Left cardiac atrium (tissue), 4 donors: ENCODE measurements at regions of chr11 and their contacts with region 1.

Region 1: DNA sequence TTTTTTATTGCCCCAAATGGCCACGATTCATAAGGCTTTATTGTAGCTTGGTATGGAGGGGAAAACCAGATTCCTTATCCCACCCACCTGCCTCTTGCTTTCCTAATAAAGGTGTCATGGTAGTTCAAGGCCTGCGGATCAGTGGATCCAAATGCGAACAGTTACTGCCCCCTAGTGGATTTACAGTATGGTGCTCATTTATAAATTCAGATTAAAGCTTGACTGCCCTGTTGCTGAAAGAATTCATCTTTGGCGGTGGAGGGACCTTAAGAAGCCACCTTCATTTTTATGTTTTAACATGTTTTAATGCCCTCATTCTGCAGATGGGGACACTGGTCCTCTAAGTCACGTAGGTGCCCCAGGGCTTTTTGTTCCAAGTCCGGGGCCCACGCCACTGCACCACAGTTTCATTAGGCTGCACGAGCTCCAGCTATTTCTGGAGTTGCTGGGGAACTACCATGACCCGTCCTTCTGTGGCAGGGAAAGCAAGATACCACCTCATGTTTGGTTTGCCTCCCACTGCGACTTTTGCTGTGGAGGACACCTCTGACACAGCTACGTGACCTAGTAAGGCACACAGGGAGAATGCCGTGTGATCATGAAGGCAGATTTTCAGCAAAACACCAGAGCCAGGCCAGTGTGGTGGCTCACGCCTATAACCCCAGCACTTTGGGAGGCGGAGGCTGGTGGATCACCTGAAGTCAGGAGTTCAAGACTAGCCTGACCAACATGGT is 15.6 kb upstream of the INCENP start:
- DNase-seq: no peak
- ATAC-seq: peak; percentile 12 to 25

Region 2: DNA sequence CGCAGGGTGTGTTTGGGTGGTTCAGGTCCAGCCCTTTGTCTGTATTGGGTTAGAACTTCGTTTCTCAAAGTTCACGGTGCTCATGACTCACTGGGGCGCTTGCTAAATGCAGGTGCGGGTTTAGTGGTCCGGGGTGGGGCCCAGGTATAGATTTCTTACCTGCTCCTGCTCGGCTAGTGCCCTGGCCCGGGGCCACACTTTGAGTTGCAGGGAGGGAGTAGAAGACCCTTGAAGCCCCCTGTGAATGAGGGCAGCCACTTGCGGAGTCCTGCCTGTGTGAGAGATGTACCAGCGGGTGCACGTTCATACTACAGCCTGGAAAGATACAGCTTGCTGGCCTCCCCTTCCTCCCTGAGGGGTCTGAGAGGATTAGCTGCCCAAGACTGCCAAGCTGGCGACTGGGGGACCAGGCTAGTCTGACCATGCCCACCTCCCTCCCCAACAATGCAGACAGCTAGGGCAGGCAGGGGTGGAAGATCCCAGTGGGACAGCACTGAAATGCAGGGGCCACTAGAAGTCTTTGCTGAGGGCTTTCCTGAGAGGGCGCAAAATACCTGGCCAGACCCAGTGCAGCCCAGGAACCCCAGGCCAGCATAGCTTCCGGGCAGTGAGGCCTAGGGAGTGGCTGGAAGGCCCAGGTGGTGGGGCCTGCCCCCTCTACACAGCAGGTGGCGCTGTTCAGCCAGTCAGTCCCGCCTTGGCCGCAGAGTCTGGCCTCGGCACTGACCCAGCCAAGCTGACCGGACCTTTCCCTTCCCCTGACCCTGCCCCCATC is 360.8 kb before region 1 on chr11:
- intact Hi-C with region 1: loop called in 1 of 2 experiments (anchors 5 kb)
- DNase-seq: peak; percentile 87
- ATAC-seq: peak; percentile 83 to 87

Region 3: GRCh38 chr11:61797263-61797944 is 310.8 kb before region 1 on chr11:
- intact Hi-C with region 1: loop called in 1 of 2 experiments (anchors 5 kb)
- DNase-seq: peak; percentile 82
- ATAC-seq: peak; percentile 15 to 38

Region 4: DNA sequence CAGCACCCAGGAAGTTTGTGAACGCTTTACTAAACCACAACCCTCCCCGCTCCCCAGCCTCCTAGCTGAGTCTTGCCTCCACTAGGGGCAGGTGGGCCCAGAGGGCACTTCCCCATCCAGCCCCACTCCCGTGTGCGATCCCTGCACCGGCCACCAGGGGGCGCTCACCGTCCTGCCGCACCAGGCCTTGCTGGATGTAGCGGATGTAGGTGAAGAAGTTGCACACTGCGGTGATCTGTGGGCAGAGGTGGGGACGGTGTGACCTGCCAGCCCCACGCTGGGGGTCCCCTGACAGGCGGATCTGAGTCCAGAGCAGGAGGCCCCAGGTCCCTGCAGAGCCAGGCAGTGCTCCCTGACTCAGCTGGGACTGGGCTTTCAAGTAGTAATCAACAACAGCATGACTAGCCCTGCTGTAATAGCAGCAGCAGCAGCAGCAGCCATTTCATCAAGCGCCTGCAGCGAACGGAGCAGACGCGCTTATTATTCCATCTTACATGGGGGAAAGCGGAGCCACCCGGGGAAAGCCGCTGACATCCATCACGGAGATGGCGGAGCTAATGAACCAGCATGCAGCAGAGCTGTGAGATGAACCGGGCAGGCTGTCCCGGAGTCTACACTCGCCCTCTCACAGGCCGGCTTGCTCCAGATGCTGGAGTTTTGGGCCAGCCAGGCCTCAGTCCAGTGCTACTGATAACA is 208.9 kb before region 1 on chr11:
- intact Hi-C with region 1: loop called in 1 of 2 experiments (anchors 5 kb)
- DNase-seq: peak; percentile 82
- ATAC-seq: peak; percentile 83 to 85

Region 5: DNA sequence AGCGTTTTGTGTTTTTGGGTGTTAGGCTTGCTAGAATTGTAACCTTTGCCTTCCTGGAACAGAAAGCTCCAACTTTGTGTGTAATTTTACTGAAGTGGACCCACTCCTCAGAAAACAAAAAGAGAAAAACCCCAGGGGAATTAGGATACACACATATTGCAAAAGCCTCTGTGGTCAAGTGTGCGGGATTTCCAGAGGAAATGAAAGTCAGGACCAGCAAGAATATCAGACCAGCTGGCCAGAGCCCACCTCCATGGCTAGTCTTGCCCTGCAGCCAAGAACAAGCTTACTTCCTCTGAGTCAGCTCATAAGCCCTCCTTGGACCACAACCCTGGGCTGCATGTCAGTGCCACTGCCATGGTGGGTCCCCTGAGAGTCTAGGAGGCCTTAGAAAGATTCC is 103.7 kb before region 1 on chr11:
- intact Hi-C with region 1: no loop called
- DNase-seq: peak; percentile 68
- ATAC-seq: peak; percentile 70 to 88